ENCODE measurements at regions of chr22 and their contacts with region 1.

Region 1: GRCh38 chr22:30423982-30424963 is 1.3 kb upstream of the MTFP1 start:
- DNase-seq: peak; percentile 99
- H3K4me3 Mint-ChIP-seq: peak overlapping the region; percentile 98
- H3K27ac Mint-ChIP-seq: peak overlapping the region; percentile 98
- H3K4me1 Mint-ChIP-seq: peaks cover 64% of the 10 kb centered on the region
- H3K27me3 Mint-ChIP-seq: no peaks in the 10 kb centered on the region

Region 2: GRCh38 chr22:30386960-30387827 is 37.1 kb before region 1 on chr22 and contains the start of gene RNF215:
- CTCF ChIA-PET with region 1: interaction called, 81 read pairs
- DNase-seq: peak; percentile 82
- H3K4me3 Mint-ChIP-seq: peak within 1 kb of the TSS; percentile 79
- H3K27ac Mint-ChIP-seq: peak within 1 kb of the TSS; percentile 76
- H3K4me1 Mint-ChIP-seq: peaks cover 31% of the 10 kb centered on the region
- H3K27me3 Mint-ChIP-seq: peaks cover 13% of the 10 kb centered on the region

Region 3: DNA sequence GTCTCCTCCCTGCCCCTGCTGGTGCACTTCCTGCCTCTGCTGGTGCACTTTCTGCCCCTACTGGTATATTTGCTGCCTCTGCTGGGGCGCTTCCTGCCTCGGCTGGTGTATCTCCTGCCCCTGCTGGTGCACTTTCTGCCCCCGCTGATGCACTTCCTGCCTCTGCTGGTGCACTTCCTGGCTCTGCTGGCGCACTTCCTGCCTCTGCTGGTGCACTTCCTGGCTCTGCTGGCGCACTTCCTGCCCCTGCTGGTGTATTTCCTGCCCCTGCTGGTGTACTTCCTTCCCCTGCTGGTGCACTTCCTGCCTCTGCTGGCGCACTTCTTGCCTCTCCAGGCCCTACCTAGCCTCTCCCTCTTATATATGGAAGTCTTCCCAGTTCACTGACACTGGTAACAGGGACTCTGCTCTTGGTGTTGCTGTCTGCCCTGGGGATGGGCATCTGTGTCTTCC is 11.4 kb after region 1 on chr22:
- CTCF ChIA-PET with region 1: interaction called, 11 read pairs
- DNase-seq: peak; percentile 86
- H3K4me3 Mint-ChIP-seq: peak overlapping the region; percentile 67
- H3K27ac Mint-ChIP-seq: peak overlapping the region; percentile 90
- H3K4me1 Mint-ChIP-seq: peaks cover 23% of the 10 kb centered on the region
- H3K27me3 Mint-ChIP-seq: peaks cover 32% of the 10 kb centered on the region

Region 4: DNA sequence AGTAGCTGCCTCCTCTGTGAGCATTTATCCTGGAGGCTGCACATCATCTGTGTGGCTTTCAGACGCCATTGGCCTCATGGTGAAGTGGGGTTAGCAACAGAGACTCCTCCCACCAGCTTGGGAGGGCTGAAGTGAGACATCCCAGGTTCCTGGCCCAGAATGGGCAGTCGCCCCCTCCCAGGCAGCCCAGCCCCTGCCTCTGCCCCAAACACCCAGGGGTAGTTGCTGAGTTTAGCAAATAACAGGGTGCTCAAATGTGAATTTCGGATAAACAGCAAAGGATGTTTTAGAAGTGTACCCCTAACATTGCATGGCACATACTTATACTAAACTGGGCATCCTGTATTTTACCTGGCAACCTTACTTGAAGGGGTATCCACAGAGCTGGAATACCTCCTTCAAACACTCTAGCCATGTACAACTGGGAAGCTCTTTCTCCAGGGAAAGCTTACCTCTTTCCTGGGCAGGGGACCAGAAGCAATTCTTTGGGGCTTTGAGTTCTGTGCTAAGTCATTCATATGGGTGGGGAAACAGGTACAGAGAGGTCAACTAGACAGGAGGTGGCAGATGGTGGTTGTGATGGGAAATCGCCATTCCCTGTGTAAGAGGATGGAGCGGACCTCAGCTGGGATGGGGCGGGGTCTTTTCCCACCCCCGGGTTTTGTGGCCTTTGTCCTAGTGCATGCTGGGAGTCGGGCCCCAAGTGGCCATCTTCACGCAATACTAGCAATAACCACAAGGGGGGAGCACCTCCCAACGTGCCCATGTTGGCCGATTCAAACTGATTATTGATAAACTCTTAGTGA is 20.6 kb after region 1 on chr22:
- CTCF ChIA-PET with region 1: interaction called, 11 read pairs
- DNase-seq: peak; percentile 64
- H3K4me3 Mint-ChIP-seq: no peak overlapping the region
- H3K27ac Mint-ChIP-seq: no peak overlapping the region
- H3K4me1 Mint-ChIP-seq: peaks cover 33% of the 10 kb centered on the region
- H3K27me3 Mint-ChIP-seq: peaks cover 65% of the 10 kb centered on the region

Region 5: GRCh38 chr22:30490399-30490798 is 66.1 kb after region 1 on chr22:
- CTCF ChIA-PET with region 1: no interaction called
- DNase-seq: no peak
- H3K4me3 Mint-ChIP-seq: no peak overlapping the region
- H3K27ac Mint-ChIP-seq: no peak overlapping the region
- H3K4me1 Mint-ChIP-seq: no peaks in the 10 kb centered on the region
- H3K27me3 Mint-ChIP-seq: peaks cover 36% of the 10 kb centered on the region